ENCODE measurements at regions of chr7 and their contacts with region 1.

Region 1: DNA sequence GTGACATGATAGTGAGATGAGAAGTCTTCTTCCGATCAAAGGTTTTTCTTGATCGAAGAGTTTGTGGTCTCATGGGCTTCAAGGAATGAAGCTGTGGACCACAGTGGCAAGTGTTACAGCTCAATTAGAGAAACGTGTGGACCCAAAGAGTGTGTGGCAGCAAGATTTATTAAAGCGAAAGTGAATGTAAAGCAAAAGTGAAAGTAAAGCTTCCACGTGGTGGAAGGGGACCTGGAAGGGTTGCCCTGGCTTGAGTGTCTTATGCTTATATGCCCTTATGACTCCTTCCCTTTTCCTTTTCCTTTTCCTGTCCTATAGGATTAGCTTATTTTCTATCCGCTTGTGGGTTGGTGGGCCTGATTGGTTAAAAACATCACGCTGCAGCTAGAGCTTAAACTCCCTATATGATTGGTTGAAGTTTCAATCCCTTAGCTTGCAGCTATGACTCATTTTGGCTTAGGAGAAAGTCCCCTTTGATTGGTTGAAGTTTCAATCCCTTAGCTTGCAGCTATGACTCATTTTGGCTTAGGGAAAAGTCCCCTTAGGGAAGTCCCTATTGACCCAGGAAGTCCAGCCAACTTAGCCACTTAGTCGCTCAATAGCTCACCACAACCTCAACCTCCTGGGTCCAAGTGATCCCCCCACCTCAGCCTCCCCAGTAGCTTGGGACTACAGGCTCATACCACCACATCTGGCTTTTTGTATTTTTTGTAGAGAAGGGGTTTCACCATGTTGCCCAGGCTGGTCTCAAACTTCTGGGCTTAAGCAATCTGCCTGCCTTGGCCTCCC is 34.7 kb downstream of the MRPS24 start:
- DNase-seq: peak; percentile 62
- ATAC-seq: peak; percentile 63
- H3K4me3 Mint-ChIP-seq: peak overlapping the region; percentile 75
- H3K27ac Mint-ChIP-seq: peak overlapping the region; percentile 94
- H3K4me1 Mint-ChIP-seq: peaks cover 32% of the 10 kb centered on the region
- H3K27me3 Mint-ChIP-seq: peaks cover 2% of the 10 kb centered on the region
- CTCF ChIP-seq: no peak

Region 2: GRCh38 chr7:42911454-42912447 is 922.9 kb before region 1 on chr7 and contains the start of gene C7orf25:
- CTCF ChIA-PET with region 1: no interaction called
- POLR2A ChIA-PET with region 1: no interaction called
- intact Hi-C with region 1: loop called (anchors 10 kb)
- DNase-seq: peak; percentile 96
- ATAC-seq: peak; percentile 92
- H3K4me3 Mint-ChIP-seq: peak within 1 kb of the TSS; percentile 87
- H3K27ac Mint-ChIP-seq: peak within 1 kb of the TSS; percentile 90
- H3K4me1 Mint-ChIP-seq: peaks cover 59% of the 10 kb centered on the region
- H3K27me3 Mint-ChIP-seq: no peaks in the 10 kb centered on the region
- CTCF ChIP-seq: no peak
- total RNA-seq, gene C7orf25: 2.4 to 3.4 TPM

Region 3: DNA sequence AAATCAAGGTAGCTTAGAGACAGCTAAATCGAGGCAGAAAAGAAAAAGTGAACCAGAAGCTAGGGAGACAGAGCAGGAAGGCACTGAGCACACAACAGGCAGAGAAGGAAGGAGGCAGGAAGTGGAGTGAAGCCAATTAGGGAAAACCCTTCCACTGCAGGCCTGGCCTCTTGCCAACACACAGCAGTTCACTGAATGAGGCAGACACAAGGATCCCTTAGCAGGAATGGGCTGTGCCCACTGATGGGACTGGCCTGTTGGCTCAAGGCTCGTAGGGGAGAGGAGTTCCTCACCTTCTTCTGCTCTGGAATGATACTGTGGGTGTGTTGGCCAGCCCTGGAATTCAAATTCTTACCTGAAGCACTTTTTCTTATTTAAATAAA is 472.0 kb before region 1 on chr7:
- CTCF ChIA-PET with region 1: no interaction called
- POLR2A ChIA-PET with region 1: no interaction called
- intact Hi-C with region 1: no loop called
- DNase-seq: no peak
- ATAC-seq: no peak
- H3K4me3 Mint-ChIP-seq: no peak overlapping the region
- H3K27ac Mint-ChIP-seq: no peak overlapping the region
- H3K4me1 Mint-ChIP-seq: no peaks in the 10 kb centered on the region
- H3K27me3 Mint-ChIP-seq: peaks cover 5% of the 10 kb centered on the region
- CTCF ChIP-seq: no peak

Region 4: DNA sequence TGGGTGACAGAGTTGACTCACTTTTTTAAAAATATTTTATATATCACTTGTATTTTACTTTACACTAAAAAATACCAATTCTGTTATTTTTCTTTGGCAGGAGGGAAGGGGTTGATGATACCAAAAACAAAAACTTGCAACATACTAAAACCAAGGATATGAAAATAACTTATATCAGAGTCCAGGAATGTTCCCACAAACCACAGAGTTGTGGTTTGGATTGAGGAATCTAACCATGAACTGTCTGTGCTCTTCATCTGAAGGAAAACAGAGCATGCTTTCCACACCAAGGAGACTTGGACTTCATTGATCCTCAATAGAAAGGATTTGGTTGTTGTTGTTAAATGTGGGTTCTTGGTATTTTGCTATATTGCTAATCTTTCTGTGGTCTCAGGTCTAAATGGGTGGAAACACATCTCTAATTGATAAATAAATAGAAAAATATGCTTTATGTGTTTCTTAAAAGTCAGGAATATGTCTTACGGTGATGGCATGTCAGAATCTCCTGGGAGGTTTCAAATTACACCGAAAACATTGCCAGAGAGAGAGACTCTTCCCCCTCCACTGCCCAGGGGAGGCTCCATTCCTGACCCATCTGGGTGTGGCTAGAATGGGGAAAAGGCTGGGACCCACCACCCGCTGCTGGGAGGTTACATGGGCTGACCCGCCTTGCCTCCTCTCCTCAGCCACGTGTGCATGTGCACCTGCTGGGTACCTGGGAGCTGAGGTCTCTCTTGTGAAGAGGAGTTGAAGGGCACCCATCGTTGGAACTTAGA is 298.7 kb before region 1 on chr7:
- CTCF ChIA-PET with region 1: no interaction called
- POLR2A ChIA-PET with region 1: no interaction called
- intact Hi-C with region 1: no loop called
- DNase-seq: no peak
- ATAC-seq: no peak
- H3K4me3 Mint-ChIP-seq: no peak overlapping the region
- H3K27ac Mint-ChIP-seq: no peak overlapping the region
- H3K4me1 Mint-ChIP-seq: no peaks in the 10 kb centered on the region
- H3K27me3 Mint-ChIP-seq: peaks cover 3% of the 10 kb centered on the region
- CTCF ChIP-seq: no peak

Region 5: DNA sequence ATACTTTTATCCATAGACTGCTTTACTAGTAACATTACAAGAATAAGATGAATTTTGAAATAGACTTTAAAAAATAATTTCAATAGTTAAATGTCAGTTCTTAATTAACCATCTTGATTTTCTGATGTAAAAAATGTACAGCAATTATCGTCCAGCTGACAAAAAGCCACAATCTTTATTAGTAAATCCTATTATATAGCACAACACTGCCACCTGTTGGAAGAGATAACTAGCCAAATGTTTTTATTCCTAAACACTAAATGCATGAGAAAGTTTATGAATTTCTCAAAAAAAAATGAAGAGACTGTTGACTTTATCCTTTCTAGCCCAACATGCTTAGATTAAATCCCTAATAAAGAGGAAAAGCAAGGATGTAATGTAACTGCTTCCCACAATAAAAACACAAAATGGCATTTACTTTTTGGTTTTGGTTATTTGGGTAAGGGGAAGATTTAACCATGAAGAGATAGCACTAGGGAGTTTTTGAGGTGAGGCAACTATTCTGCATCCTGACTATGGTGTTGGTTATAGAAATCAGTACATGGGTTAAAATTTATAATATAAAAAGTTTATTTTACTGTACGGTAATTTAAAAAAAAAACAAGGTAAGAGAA is 113.4 kb before region 1 on chr7:
- CTCF ChIA-PET with region 1: interaction called, 39 read pairs
- POLR2A ChIA-PET with region 1: no interaction called
- intact Hi-C with region 1: loop called (anchors 5 kb)
- DNase-seq: no peak
- ATAC-seq: no peak
- H3K4me3 Mint-ChIP-seq: no peak overlapping the region
- H3K27ac Mint-ChIP-seq: no peak overlapping the region
- H3K4me1 Mint-ChIP-seq: peaks cover 52% of the 10 kb centered on the region
- H3K27me3 Mint-ChIP-seq: no peaks in the 10 kb centered on the region
- CTCF ChIP-seq: peak; percentile 80

Region 6: DNA sequence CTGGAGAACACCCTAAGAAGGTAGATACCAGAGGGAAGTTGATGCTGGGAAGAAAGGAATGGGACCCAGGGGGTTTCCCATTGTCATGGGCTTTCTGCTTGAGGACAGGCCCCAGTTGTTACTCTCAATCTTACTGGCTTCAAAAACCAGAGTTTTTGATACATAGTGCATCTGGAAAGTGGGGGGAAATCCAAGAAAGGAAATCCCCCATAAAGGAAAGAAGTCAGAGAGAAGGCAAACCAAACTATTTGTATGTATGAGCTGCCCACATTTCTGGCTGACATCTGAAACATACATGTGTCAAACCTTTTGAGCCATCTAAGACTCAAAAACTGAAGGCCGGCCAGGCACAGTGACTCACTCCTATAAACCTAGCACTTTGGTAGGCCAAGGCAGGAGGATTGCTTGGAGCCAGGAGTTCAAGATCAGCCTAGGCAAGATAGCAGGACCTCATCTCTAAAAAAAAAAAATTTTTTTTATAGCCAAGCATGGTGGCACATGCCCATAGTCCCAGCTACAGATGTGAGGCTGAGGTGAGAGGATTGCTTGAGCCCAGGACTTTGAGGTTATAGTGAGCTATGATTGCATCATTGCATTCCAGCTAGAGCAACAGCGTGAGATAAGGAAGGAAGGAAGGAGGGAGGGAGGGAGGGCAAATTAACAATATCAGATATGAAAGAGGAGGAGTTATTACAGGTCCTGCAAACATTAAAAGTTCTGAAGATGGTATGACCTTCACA is 98.7 kb before region 1 on chr7:
- CTCF ChIA-PET with region 1: interaction called, 39 read pairs
- POLR2A ChIA-PET with region 1: interaction called, 3 read pairs
- intact Hi-C with region 1: no loop called
- DNase-seq: peak; percentile 80
- ATAC-seq: peak; percentile 96
- H3K4me3 Mint-ChIP-seq: no peak overlapping the region
- H3K27ac Mint-ChIP-seq: peak overlapping the region; percentile 65
- H3K4me1 Mint-ChIP-seq: peaks cover 14% of the 10 kb centered on the region
- H3K27me3 Mint-ChIP-seq: peaks cover 2% of the 10 kb centered on the region
- CTCF ChIP-seq: no peak

Region 7: DNA sequence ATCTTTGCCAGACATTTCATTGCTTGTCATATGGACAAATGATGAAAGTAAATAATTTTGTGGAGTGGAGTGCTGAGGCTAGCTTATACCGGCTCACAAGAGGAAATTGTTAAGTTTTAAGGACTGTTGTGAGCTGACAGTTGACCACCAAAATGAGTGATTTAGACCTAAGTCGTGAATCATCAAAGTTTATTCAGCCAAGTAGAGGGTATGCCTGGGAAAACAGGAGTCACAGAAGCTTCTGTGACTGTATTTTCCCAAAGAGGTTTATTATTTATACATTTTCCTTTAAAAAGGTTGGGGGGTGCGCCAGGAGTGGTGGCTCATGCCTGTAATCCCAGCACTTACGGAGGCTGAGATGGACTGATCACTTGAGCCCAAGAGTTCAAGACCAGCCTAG is 12.8 kb after region 1 on chr7:
- CTCF ChIA-PET with region 1: interaction called, 14 read pairs
- POLR2A ChIA-PET with region 1: no interaction called
- intact Hi-C with region 1: no loop called
- DNase-seq: no peak
- ATAC-seq: no peak
- H3K4me3 Mint-ChIP-seq: no peak overlapping the region
- H3K27ac Mint-ChIP-seq: no peak overlapping the region
- H3K4me1 Mint-ChIP-seq: peaks cover 5% of the 10 kb centered on the region
- H3K27me3 Mint-ChIP-seq: no peaks in the 10 kb centered on the region
- CTCF ChIP-seq: no peak